Activated T-helper 2 cell treated with anti-CD3 and anti-CD28 coated beads, Interferon-gamma antibody, Interleukin-2, Interleukin-4, amounts not matched to agents 10 μg/mL and 5 μg/mL and 100 μg/mL, durations not matched to agents 14 hours and 24 hours and 36 hours (primary cell): ENCODE measurements at regions of chr7 and their contacts with region 1.

Region 1: DNA sequence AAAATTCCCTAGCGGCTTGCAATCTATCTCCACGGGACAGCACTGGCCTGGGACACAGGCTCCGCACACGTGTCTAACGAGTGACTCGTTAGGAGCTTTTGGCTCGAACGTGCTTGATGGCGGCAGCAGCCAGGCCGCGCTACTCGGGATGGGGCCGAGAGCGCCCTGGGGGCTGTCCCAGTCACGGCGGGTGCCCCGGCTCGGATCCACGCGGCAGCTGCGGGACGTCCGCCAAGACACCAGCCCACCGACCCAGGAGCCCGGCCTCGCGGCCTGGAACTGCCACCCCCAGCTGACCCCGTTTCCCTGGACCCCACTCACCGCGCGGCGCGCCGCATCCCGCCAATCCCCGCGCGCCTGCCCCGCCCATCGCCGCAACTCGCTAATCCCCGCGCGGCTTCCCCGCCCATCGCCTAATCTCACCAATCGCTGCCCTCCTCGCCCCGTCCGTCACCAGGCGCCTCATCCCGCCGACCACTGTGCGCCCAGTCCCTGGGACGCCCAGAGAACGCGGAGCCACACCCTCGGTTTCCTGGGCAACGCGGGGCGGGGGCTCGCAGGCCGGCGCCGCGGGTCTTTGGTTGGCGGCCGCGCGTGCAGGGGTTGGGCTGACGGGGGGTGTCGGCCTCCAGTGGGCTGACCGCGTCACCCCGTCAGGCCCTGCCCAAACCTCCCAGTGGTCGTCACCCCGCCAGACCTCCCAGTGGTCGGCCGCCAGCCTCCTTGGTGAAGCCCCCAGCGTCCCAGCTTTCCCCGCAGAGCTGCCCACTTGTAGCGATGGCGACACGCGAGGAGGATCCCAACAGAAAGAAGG is at the start of gene POLD2:
- DNase-seq: peak; percentile 98
- H3K4me3 Mint-ChIP-seq: peak within 1 kb of the TSS; percentile 86
- H3K27ac Mint-ChIP-seq: peak within 1 kb of the TSS; percentile 81
- H3K4me1 Mint-ChIP-seq: peaks cover 31% of the 10 kb centered on the region
- H3K27me3 Mint-ChIP-seq: peaks cover 15% of the 10 kb centered on the region
- total RNA-seq, gene POLD2: 205 and 215 TPM in 2 replicates

Region 2: DNA sequence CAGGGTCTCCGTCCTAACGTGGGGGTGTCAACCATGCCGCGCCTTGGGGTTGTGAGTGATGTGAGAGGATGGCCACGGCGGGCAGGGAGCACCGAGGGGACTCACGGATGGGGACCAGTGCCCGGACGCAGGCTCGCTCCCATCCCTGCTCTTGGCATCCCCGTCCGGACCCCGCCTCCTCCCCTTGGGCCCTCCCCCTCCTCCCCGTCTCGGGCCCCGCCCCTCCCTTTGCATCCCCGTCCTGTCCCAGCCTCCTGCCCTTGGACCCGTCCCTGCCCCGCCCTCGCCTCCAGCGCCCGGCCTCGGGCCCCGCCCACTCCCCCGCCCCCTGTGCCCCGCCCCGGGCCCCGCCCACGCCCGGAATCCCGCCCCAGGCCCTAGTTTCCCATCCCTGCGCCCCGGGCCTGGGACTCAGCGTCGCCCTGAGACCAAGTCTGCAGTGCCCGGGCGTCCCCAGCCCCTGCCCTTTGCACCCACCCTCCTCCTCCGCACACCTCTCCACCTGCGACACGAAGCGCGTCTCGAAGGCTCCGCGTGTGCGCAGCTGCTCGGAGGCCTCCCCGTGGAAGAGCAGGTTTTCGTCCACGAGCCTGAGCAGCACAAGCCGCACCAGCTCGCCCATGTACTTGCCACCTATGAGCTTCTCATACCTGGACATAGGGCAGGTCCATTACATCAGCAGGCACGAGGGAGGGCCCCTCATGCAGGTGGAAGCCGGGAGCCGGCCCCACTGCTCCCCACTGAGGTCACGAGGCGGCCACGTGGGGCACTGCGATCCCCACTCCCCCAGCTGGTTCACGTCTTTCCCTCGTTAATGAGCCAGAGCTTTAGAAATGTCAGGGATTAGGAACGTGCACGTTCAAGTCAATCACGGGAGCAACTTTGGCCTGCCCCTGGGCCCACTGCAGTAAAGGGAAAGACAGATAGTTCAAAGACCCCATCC is 22.8 kb after region 1 on chr7:
- intact Hi-C with region 1: loop called (anchors 1 kb)
- DNase-seq: peak; percentile 69
- H3K4me3 Mint-ChIP-seq: peak overlapping the region; percentile 75
- H3K27ac Mint-ChIP-seq: no peak overlapping the region
- H3K4me1 Mint-ChIP-seq: no peaks in the 10 kb centered on the region
- H3K27me3 Mint-ChIP-seq: peaks cover 8% of the 10 kb centered on the region

Region 3: GRCh38 chr7:44194069-44194468 is 70.7 kb after region 1 on chr7:
- intact Hi-C with region 1: no loop called
- DNase-seq: no peak
- H3K4me3 Mint-ChIP-seq: no peak overlapping the region
- H3K27ac Mint-ChIP-seq: no peak overlapping the region
- H3K4me1 Mint-ChIP-seq: peaks cover 14% of the 10 kb centered on the region
- H3K27me3 Mint-ChIP-seq: peaks cover 7% of the 10 kb centered on the region